Psoas muscle (tissue), 8 donors: ENCODE measurements at regions of chr13 and their contacts with region 1.

Region 1: DNA sequence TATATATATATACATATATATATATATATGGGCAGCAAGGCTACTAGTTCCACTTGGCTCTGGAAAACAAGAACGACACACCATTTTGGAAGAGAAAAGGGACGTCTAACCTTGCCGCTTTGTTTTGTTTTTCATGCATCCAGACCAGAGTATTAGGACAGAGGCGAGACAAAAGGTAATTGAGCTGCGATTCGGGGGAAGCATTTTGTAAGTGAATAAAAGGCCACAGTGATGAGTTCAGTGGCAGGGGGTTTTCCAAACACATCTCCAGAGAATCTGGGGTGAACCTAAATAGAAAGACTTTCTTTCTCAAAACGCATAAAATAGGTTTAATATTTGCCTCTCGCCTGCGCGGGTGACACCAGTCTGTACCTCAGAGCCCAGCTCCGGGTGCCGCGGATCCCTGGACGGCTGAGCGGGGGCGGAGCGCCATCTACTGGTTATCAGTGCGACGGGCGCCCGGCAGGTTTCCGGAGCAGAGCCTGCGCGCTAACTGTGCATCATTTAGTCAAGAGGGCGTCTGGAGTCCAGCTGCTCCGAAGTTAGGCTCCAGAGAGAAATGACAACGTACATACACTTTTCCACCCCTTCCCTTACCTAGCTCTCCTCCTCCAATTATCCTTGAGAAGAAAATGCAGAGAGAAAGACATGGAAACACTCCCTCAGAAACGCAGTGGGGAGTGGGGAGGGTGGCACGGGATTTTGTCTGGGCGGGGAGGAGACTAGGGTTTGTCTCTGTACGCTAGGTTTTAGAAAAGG is 262.3 kb downstream of the TBC1D4 start:
- DNase-seq: peak; percentile 77 to 87
- ATAC-seq: peak; percentile 87 to 99 (median 94)
- H3K4me3 ChIP-seq: peak overlapping the region; percentile 56
- H3K27ac ChIP-seq: no peak overlapping the region
- H3K4me1 ChIP-seq: peaks cover 4% of the 10 kb centered on the region
- H3K27me3 ChIP-seq: no peaks in the 10 kb centered on the region
- CTCF ChIP-seq: peak; percentile 97

Region 2: DNA sequence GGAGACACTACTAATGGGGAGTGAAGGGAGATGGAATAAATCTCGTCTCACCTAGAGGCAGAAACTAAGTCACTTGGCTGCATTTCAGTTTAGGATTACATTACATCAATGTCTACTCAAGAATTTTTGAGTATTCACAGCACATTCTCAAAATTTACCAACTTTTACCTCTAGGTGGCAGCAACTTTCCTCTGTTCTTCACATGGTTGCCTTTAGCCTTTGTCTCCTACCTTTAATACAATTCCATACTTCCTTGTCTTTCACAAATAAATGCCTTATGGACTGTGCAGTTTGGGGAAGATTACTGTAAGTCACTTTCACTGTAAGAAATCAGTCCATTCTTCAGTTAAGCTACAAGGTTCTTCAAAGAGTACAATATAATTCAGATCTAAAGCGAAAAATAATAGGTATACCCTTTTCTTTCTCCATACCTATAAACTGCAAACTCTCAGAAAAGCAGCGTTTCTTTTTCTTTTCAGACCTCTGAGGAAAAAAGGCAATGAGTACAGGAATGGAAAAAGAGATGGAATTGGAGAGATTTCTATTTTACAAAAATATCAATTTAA is 1464.8 kb before region 1 on chr13:
- intact Hi-C with region 1: loop called in 1 of 2 experiments (anchors 5 kb)
- DNase-seq: no peak
- ATAC-seq: peak; percentile 49 to 88 (median 62)
- H3K4me3 ChIP-seq: no peak overlapping the region
- H3K27ac ChIP-seq: no peak overlapping the region
- H3K4me1 ChIP-seq: no peaks in the 10 kb centered on the region
- H3K27me3 ChIP-seq: no peaks in the 10 kb centered on the region
- CTCF ChIP-seq: peak; percentile 73

Region 3: GRCh38 chr13:73835138-73835721 is 1384.4 kb before region 1 on chr13:
- intact Hi-C with region 1: loop called (anchors 10 kb)
- DNase-seq: no peak
- ATAC-seq: peak in 2 of 4 donors; percentile 68 to 75
- H3K4me3 ChIP-seq: no peak overlapping the region
- H3K27ac ChIP-seq: no peak overlapping the region
- H3K4me1 ChIP-seq: peaks cover 4% of the 10 kb centered on the region
- H3K27me3 ChIP-seq: no peaks in the 10 kb centered on the region
- CTCF ChIP-seq: peak; percentile 70

Region 4: DNA sequence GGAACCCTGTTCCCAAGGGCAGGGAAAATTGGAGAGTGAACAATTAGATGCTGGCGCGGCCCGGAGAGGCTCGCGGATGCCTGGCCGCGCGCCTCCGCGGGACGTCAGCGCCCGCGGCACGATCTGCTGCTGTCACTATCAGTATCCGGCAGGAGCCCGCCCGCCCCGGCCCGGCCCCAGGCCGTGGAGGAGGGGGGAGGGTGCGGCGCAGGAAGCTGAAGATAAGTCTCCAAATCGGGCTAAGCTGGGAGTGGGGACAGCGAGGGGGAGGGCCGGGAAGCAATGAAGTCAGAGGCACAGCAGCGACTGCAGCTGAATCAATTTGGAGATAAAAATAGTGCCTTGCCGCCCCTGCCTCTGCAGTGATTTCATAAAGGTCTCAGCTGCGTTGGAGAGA is 643.9 kb before region 1 on chr13:
- intact Hi-C with region 1: loop called in 1 of 2 experiments (anchors 10 kb)
- DNase-seq: peak; percentile 68 to 83
- ATAC-seq: peak; percentile 67 to 86 (median 72)
- H3K4me3 ChIP-seq: peak overlapping the region; percentile 49
- H3K27ac ChIP-seq: no peak overlapping the region
- H3K4me1 ChIP-seq: no peaks in the 10 kb centered on the region
- H3K27me3 ChIP-seq: peaks cover 0 to 9% (median 0%) of the 10 kb centered on the region in 3 donors
- CTCF ChIP-seq: no peak